ENCODE measurements at regions of chrX and their contacts with region 1.

Region 1: GRCh38 chrX:39730662-39731397 is 366.9 kb downstream of the BCOR start:
- DNase-seq: peak; percentile 52 to 68
- ATAC-seq: peak; percentile 91
- H3K4me3 ChIP-seq: no peak overlapping the region
- H3K27ac ChIP-seq: peak overlapping the region in 1 of 4 donors; percentile 24
- H3K4me1 ChIP-seq: peaks cover 3 to 7% of the 10 kb centered on the region in 2 donors
- H3K27me3 ChIP-seq: peaks cover 0 to 3% (median 0%) of the 10 kb centered on the region in 3 donors
- CTCF ChIP-seq: peak; percentile 38 to 72 (median 47)
- POLR2A ChIP-seq: no peak

Region 2: DNA sequence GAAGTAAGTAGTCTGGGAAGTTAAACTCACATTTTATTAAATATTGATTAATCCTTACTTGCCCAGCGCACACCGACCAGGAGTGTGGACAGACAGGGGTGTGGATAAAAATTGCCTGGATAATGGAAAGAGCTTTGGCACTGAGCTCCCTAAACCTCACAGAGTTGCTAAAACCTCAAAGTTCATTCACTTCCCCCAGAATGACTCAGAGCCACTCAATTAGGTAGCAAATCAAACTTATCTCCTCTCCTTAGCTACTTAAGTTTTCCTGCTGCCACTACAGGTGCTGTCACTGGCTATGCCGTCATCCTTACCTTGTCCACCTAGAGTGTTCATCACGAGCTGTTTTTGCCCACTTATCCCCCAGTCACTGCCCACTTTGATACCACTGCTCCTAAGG is 956.6 kb before region 1 on chrX:
- in situ Hi-C with region 1: no loop called
- intact Hi-C with region 1: no loop called
- DNase-seq: no peak
- ATAC-seq: no peak
- H3K4me3 ChIP-seq: no peak overlapping the region
- H3K27ac ChIP-seq: no peak overlapping the region
- H3K4me1 ChIP-seq: peaks cover 0 to 2% of the 10 kb centered on the region in 2 donors
- H3K27me3 ChIP-seq: no peaks in the 10 kb centered on the region
- CTCF ChIP-seq: no peak
- POLR2A ChIP-seq: no peak

Region 3: DNA sequence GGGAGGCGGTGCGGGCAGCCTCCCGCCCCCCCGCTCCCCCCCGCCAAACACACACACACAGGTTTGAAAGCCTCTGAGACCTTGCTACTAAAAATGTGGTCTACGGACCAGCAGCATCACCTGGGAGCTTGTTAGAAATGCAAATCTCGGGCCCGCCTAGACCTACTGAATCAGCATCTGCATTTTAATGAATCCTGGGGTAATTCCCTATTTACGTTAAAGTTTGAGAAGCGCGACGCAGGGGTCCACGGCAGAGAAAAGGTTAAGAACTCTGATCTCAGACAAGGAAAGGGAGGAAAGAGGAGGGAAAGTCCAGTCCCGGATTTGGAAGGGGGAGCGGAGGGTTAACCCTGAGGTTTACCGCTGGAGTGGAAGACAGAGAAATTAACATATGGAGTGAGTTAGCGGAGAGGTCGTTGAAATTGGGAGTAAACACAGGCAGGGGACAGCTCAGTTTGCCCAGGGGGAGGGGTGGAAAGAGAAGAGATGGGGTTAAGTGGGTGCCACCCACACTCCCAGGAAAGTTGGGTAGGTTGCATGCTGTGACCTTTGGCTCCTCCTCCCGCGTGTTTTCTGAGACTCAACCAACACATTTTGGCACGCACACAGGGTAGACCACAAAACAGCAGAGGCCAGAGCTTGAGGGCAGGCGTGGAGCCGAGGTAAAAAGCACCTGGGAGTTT is 116.7 kb before region 1 on chrX:
- in situ Hi-C with region 1: no loop called
- intact Hi-C with region 1: no loop called
- DNase-seq: no peak
- ATAC-seq: no peak
- H3K4me3 ChIP-seq: peak overlapping the region; percentile 21 to 32 (median 28)
- H3K27ac ChIP-seq: no peak overlapping the region
- H3K4me1 ChIP-seq: peaks cover 0 to 11% of the 10 kb centered on the region in 2 donors
- H3K27me3 ChIP-seq: no peaks in the 10 kb centered on the region
- CTCF ChIP-seq: no peak
- POLR2A ChIP-seq: no peak

Region 4: GRCh38 chrX:39836802-39837420 is 106.1 kb after region 1 on chrX:
- in situ Hi-C with region 1: no loop called
- intact Hi-C with region 1: no loop called
- DNase-seq: no peak
- ATAC-seq: no peak
- H3K4me3 ChIP-seq: no peak overlapping the region
- H3K27ac ChIP-seq: no peak overlapping the region
- H3K4me1 ChIP-seq: no peaks in the 10 kb centered on the region
- H3K27me3 ChIP-seq: no peaks in the 10 kb centered on the region
- CTCF ChIP-seq: no peak
- POLR2A ChIP-seq: no peak

Region 5: DNA sequence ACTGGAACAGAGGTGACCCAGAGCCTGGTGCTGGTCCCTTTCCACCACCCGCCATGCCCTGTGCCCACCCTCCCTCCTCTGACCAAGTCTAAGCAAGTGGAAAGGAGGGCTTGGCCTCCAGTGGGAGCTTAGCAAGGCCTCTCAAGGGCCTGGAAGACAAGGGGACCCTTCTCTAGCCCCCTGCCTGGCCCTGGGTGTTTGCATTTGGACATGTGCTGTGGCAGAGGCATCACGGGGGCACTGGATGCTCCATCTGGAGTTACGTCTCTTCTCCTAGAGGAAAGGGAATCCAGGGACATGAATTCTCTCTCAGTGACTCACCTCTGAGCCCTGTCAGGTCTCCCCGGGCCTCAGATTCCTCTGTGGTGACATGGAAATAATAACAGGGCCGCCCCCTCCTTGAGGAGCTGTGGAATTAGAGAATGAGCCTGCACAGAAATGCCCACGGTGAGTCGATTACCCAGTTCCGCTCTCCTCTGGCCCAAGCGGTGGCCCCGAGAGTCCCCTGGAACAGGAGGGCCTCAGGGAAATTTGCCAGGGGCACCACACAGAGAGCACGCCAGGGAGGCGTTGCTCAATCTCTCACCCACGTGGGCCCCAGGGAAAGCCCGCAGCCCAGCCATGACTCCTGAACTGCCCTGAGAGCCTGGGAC is 177.3 kb after region 1 on chrX:
- in situ Hi-C with region 1: no loop called
- intact Hi-C with region 1: loop called (anchors 5 kb)
- DNase-seq: peak; percentile 49 to 72
- ATAC-seq: peak; percentile 93 to 97
- H3K4me3 ChIP-seq: peak overlapping the region in 1 of 4 donors; percentile 28
- H3K27ac ChIP-seq: peak overlapping the region; percentile 54 to 76 (median 70)
- H3K4me1 ChIP-seq: peaks cover 0 to 18% of the 10 kb centered on the region in 2 donors
- H3K27me3 ChIP-seq: no peaks in the 10 kb centered on the region
- CTCF ChIP-seq: no peak
- POLR2A ChIP-seq: no peak

Region 6: DNA sequence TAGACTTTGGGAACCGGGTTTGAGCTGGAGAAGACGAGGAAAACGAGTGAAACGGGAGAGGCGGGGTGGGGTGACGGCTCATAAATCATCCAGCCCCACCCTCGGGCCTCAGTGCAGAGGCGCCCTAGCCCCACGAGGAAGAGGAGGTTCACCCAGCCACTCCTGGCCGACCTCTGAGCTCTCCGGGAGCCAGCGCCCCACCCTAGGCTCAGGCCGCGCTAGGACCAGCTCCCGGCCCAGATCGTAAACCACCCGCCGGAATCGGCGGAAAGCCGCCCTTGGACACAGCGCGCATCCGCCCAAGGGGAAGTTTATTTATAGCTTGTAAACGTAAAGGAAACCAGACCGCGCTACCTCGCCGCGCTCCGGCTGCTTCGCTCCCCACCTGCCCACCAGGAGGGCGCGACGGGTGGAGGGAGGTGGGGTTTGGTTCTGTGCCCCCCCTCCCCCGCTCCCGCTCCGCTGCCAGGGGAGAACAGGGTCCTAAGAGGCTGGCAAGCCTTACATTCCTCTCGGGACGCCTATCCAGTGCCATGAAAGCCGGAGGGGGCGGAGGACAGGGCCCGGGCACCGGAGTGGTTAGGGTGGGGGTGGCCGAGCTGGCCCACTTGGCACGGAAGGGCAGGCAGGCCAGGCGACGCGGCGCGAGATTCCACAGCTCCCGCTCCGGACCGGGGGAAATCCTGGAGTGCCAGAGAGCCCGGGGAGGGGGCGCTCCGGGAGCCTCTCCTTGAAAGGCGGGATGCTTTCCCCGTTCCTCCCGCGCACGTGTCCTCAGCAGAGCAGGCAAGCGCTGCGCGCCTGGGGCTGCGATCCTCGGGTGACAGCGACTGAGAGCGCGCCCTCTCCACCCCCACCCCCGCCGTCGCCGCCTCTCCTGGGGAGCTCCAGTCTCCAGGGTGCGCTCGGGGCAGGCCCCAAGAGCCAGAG is 282.7 kb after region 1 on chrX:
- in situ Hi-C with region 1: no loop called
- intact Hi-C with region 1: loop called (anchors 5 kb)
- DNase-seq: peak; percentile 49 to 67
- ATAC-seq: peak; percentile 59 to 60
- H3K4me3 ChIP-seq: peak overlapping the region; percentile 61 to 79 (median 70)
- H3K27ac ChIP-seq: peak overlapping the region; percentile 92 to 95 (median 94)
- H3K4me1 ChIP-seq: peaks cover 0 to 7% of the 10 kb centered on the region in 2 donors
- H3K27me3 ChIP-seq: peaks cover 0 to 8% (median 7%) of the 10 kb centered on the region in 3 donors
- CTCF ChIP-seq: no peak
- POLR2A ChIP-seq: peak; percentile 69 to 77

Region 7: GRCh38 chrX:40153335-40154249 is 422.8 kb after region 1 on chrX:
- in situ Hi-C with region 1: loop called in 2 of 4 experiments (anchors 25 kb)
- intact Hi-C with region 1: loop called (anchors 5 kb)
- DNase-seq: peak in 1 of 2 donors; percentile 30
- ATAC-seq: peak; percentile 6 to 20
- H3K4me3 ChIP-seq: peak overlapping the region; percentile 50 to 63 (median 60)
- H3K27ac ChIP-seq: peak overlapping the region; percentile 77 to 86 (median 82)
- H3K4me1 ChIP-seq: peaks cover 4 to 18% of the 10 kb centered on the region in 2 donors
- H3K27me3 ChIP-seq: peaks cover 0 to 22% (median 5%) of the 10 kb centered on the region in 3 donors
- CTCF ChIP-seq: peak in 1 of 5 experiments; percentile 20
- POLR2A ChIP-seq: no peak

Region 8: GRCh38 chrX:40169193-40170101 is 438.6 kb after region 1 on chrX:
- in situ Hi-C with region 1: loop called in 3 of 4 experiments (anchors 10 to 25 kb)
- intact Hi-C with region 1: loop called (anchors 5 kb)
- DNase-seq: no peak
- ATAC-seq: no peak
- H3K4me3 ChIP-seq: peak overlapping the region in 1 of 4 donors; percentile 2
- H3K27ac ChIP-seq: no peak overlapping the region
- H3K4me1 ChIP-seq: peaks cover 2 to 19% of the 10 kb centered on the region in 2 donors
- H3K27me3 ChIP-seq: peaks cover 0 to 55% (median 29%) of the 10 kb centered on the region in 3 donors
- CTCF ChIP-seq: peak in 1 of 5 experiments; percentile 31
- POLR2A ChIP-seq: no peak

Region 9: GRCh38 chrX:40175511-40176350 is 444.9 kb after region 1 on chrX:
- in situ Hi-C with region 1: loop called (anchors 10 to 25 kb)
- intact Hi-C with region 1: loop called (anchors 5 kb)
- DNase-seq: peak in 1 of 2 donors; percentile 50
- ATAC-seq: peak; percentile 47 to 53
- H3K4me3 ChIP-seq: peak overlapping the region; percentile 62 to 70 (median 66)
- H3K27ac ChIP-seq: peak overlapping the region; percentile 82 to 89 (median 85)
- H3K4me1 ChIP-seq: peaks cover 2 to 21% of the 10 kb centered on the region in 2 donors
- H3K27me3 ChIP-seq: peaks cover 0 to 40% (median 23%) of the 10 kb centered on the region in 3 donors
- CTCF ChIP-seq: no peak
- POLR2A ChIP-seq: peak in 1 of 2 donors; percentile 21

Region 10: DNA sequence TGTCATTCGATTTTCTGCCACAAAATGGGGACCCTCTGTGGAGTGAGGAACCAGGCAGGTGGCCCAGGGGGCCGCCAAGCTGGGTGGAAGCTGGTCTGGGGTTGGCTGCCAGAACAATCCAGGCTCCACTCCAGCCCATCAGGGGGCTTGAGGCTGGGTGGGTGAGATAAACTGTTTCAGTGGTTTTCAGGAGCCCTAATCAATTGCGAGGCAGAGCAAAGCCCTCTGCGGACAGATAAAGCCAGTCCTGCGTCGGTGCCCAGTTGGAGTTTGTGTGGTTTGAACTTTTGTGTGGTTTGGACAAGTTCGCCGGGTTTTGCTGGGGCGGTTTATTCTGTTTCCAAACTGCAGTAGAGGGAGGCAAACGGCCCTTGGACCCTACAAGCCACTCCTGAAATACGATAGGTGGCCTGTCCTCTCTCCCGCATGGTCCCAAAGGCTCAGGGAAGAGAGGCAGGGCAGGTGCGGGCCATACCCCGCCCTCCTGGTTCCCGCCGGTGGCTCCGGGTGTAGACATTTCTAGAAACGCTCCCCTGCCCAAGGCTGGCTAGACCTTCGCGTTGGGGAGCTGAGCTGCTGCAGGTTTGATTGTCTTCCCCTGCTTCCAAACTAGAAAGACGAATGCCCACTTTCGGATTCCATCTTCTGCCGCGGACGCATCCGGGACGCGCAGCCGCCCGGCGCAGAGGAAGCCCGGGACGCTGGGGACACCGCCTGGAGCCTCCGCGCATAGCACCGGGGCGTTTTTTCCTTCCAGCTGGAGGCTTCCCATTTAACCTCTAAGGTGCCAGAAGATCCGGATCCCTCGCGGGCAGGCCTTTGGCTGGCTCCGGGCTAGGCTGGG is 535.9 kb after region 1 on chrX:
- in situ Hi-C with region 1: loop called in 3 of 4 experiments (anchors 10 to 25 kb)
- intact Hi-C with region 1: loop called (anchors 1 kb)
- DNase-seq: peak; percentile 11 to 35
- ATAC-seq: peak; percentile 78 to 82
- H3K4me3 ChIP-seq: peak overlapping the region; percentile 49 to 59 (median 52)
- H3K27ac ChIP-seq: peak overlapping the region; percentile 6 to 60 (median 54)
- H3K4me1 ChIP-seq: no peaks in the 10 kb centered on the region
- H3K27me3 ChIP-seq: no peaks in the 10 kb centered on the region
- CTCF ChIP-seq: peak; percentile 36 to 68 (median 65)
- POLR2A ChIP-seq: no peak

Measured in gastrocnemius medialis (tissue), 4 donors.